Sciatic nerve (tissue), 2 donors: ENCODE measurements at regions of chr6 and their contacts with region 1.

Region 1: GRCh38 chr6:18122124-18123093 is at the start of gene NHLRC1:
- DNase-seq: peak; percentile 94
- ATAC-seq: peak; percentile 99
- total RNA-seq, gene NHLRC1: 1.8 TPM

Region 2: GRCh38 chr6:17962436-17963031 is 159.9 kb before region 1 on chr6:
- intact Hi-C with region 1: no loop called
- DNase-seq: no peak
- ATAC-seq: peak; percentile 89

Region 3: GRCh38 chr6:17998456-17998855 is 124.0 kb before region 1 on chr6:
- intact Hi-C with region 1: loop called (anchors 10 kb)
- DNase-seq: no peak
- ATAC-seq: no peak